Caco-2 (cell line): ENCODE measurements at regions of chr11 and their contacts with region 1.

Region 1: DNA sequence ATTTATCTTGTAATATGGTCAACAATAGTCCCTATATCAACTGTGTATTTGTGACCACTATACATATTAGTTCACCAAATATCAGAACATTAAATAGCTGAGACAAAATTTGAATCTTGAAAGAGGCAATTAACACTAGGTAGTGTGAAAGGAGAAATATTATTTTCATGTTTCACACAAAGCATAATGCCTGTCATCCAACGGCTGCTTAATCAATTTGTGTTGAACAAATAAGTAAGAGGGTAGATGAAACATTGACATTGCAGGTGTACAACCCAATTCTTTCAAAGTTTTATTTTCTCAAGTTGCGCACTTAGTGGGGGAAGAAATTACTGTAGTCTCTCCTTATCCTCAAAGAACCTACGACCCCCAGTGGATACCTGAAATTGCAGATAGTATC is 3.4 kb upstream of the OR8I2 start:
- DNase-seq: no peak
- H3K4me3 ChIP-seq: no peak overlapping the region
- H3K4me3 Mint-ChIP-seq: no peak overlapping the region
- H3K27ac Mint-ChIP-seq: no peak overlapping the region
- H3K4me1 ChIP-seq: no peaks in the 10 kb centered on the region
- H3K4me1 Mint-ChIP-seq: no peaks in the 10 kb centered on the region
- H3K27me3 ChIP-seq: no peaks in the 10 kb centered on the region
- H3K27me3 Mint-ChIP-seq: no peaks in the 10 kb centered on the region
- CTCF ChIP-seq: peak in 1 of 2 experiments; percentile 47

Region 2: DNA sequence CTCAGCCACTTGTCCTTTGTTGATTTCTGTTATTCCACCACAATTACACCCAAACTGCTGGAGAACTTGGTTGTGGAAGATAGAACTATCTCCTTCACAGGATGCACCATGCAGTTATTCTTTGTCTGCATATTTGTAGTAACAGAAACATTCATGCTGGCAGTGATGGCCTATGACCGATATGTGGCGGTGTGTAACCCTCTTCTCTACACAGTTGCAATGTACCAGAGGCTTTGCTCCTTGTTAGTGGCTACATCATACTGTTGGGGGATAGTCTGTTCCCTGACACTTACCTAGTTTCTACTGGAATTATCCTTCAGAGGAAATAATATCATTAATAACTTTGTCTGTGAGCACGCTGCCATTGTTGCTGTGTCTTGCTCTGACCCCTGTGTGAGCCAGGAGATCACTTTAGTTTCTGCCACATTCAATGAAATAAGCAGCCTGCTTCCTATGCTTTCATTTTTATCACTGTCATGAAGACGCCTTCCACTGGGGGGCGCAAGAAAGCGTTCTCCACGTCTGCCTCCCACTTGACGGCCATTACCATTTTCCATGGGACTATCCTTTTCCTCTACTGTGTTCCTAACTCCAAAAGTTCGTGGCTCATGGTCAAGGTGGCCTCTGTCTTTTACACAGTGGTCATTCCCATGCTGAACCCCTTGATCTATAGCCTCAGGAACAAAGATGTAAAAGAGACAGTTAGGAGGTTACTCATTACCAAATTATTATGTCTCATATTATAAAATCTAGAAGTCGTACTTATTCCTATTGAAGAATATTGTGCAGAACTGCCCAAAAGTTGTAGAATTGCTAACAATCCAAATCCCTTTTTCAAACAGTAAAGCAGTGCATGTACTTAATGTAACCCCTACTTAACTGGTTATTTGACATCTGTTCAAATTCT is 374.5 kb before region 1 on chr11:
- CTCF ChIA-PET with region 1: no interaction called
- POLR2A ChIA-PET with region 1: no interaction called
- intact Hi-C with region 1: loop called (anchors 5 kb)
- DNase-seq: peak in 1 of 2 experiments; percentile 64
- H3K4me3 ChIP-seq: no peak overlapping the region
- H3K4me3 Mint-ChIP-seq: no peak overlapping the region
- H3K27ac Mint-ChIP-seq: no peak overlapping the region
- H3K4me1 ChIP-seq: no peaks in the 10 kb centered on the region
- H3K4me1 Mint-ChIP-seq: no peaks in the 10 kb centered on the region
- H3K27me3 ChIP-seq: no peaks in the 10 kb centered on the region
- H3K27me3 Mint-ChIP-seq: no peaks in the 10 kb centered on the region
- CTCF ChIP-seq: peak; percentile 35 to 54

Region 3: GRCh38 chr11:55726715-55727324 is 362.9 kb before region 1 on chr11:
- CTCF ChIA-PET with region 1: no interaction called
- POLR2A ChIA-PET with region 1: no interaction called
- intact Hi-C with region 1: loop called (anchors 5 kb)
- DNase-seq: peak in 1 of 2 experiments; percentile 53
- H3K4me3 ChIP-seq: no peak overlapping the region
- H3K4me3 Mint-ChIP-seq: no peak overlapping the region
- H3K27ac Mint-ChIP-seq: no peak overlapping the region
- H3K4me1 ChIP-seq: no peaks in the 10 kb centered on the region
- H3K4me1 Mint-ChIP-seq: no peaks in the 10 kb centered on the region
- H3K27me3 ChIP-seq: no peaks in the 10 kb centered on the region
- H3K27me3 Mint-ChIP-seq: no peaks in the 10 kb centered on the region
- CTCF ChIP-seq: peak in 1 of 2 experiments; percentile 31

Region 4: DNA sequence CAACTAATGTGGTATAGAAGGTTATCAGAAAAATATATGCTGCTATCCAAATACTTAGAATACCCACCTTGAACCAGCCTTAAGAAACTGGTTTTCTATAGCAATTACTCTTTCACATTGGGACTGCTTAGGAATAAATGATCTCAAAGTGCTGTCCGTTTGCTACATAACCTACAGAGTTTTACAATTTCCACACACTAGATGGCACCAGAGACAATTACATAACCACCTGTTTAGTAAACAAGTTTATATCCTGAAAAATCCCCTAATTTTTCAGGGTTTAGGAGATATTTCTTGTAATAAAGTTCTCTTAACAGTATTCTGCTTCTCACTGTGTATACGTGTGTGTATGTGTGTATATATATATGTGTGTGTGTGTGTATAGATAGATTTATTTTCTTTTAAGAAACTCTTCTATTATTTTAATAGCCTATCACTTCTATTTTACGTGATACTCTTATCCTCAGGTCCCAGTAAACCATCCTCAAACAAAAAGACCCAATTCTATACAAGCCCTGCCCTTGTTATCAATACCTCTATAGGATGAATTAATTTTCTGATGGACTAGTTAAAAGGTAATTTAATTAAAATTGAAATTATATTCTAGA is 146.8 kb before region 1 on chr11:
- CTCF ChIA-PET with region 1: no interaction called
- POLR2A ChIA-PET with region 1: no interaction called
- intact Hi-C with region 1: loop called (anchors 1 kb)
- DNase-seq: peak in 1 of 2 experiments; percentile 57
- H3K4me3 ChIP-seq: no peak overlapping the region
- H3K4me3 Mint-ChIP-seq: no peak overlapping the region
- H3K27ac Mint-ChIP-seq: no peak overlapping the region
- H3K4me1 ChIP-seq: peaks cover 5% of the 10 kb centered on the region; the same call in 1 of the 2 replicates
- H3K4me1 Mint-ChIP-seq: no peaks in the 10 kb centered on the region
- H3K27me3 ChIP-seq: no peaks in the 10 kb centered on the region
- H3K27me3 Mint-ChIP-seq: peaks cover 2% of the 10 kb centered on the region
- CTCF ChIP-seq: peak; percentile 55 to 65

Region 5: DNA sequence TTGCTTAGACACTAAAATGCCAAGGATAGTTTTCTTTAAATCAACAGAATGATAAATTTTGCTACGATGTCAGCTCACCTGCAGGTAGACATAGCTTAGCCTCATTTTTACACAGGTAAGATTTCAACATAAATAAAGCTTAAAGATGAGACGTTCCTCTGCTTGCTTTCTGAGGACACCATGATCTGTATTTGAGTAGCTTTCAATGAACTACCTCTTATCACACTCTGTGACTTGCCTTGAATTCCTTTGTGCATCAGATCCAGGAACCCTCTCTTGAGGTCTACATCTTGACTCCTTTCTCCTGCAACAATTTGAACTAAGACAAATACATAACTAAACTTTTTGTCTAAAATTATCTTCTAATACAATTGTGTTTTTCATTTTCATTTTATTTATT is 22.7 kb before region 1 on chr11:
- CTCF ChIA-PET with region 1: no interaction called
- POLR2A ChIA-PET with region 1: no interaction called
- intact Hi-C with region 1: loop called (anchors 1 kb)
- DNase-seq: peak; percentile 50 to 65
- H3K4me3 ChIP-seq: no peak overlapping the region
- H3K4me3 Mint-ChIP-seq: no peak overlapping the region
- H3K27ac Mint-ChIP-seq: peak overlapping the region; percentile 83
- H3K4me1 ChIP-seq: peaks cover 40% of the 10 kb centered on the region
- H3K4me1 Mint-ChIP-seq: no peaks in the 10 kb centered on the region
- H3K27me3 ChIP-seq: no peaks in the 10 kb centered on the region
- H3K27me3 Mint-ChIP-seq: no peaks in the 10 kb centered on the region
- CTCF ChIP-seq: no peak